CD4-positive, alpha-beta memory T cell (primary cell): ENCODE measurements at regions of chr2 and their contacts with region 1.

Region 1: GRCh38 chr2:219229305-219230058 is at the starts of genes ANKZF1 and ATG9A:
- DNase-seq: peak; percentile 98 to 100 (median 99)
- H3K4me3 ChIP-seq: peak within 1 kb of the TSS; percentile 63 to 69
- H3K4me3 Mint-ChIP-seq: peak within 1 kb of the TSS; percentile 94 to 99 (median 96)
- H3K27ac ChIP-seq: peak within 1 kb of the TSS; percentile 87
- H3K27ac Mint-ChIP-seq: peak within 1 kb of the TSS; percentile 94 to 98 (median 96)
- H3K4me1 ChIP-seq: peaks cover 49% of the 10 kb centered on the region
- H3K4me1 Mint-ChIP-seq: peaks cover 28 to 82% (median 51%) of the 10 kb centered on the region in 4 donors
- H3K27me3 ChIP-seq: no peaks in the 10 kb centered on the region
- H3K27me3 Mint-ChIP-seq: no peaks in the 10 kb centered on the region
- total RNA-seq, gene ANKZF1: 244 to 260 TPM
- total RNA-seq, gene ATG9A: 48.7 to 53.0 TPM

Region 2: GRCh38 chr2:219171231-219171651 is 58.2 kb before region 1 on chr2:
- CTCF ChIA-PET with region 1: interaction called, 13 read pairs
- POLR2A ChIA-PET with region 1: interaction called, 73 read pairs
- intact Hi-C with region 1: no loop called
- DNase-seq: peak; percentile 39 to 58 (median 49)
- H3K4me3 ChIP-seq: no peak overlapping the region
- H3K4me3 Mint-ChIP-seq: peak overlapping the region in 1 of 8 donors; percentile 25
- H3K27ac ChIP-seq: no peak overlapping the region
- H3K27ac Mint-ChIP-seq: peak overlapping the region; percentile 35 to 91 (median 75)
- H3K4me1 ChIP-seq: peaks cover 31% of the 10 kb centered on the region
- H3K4me1 Mint-ChIP-seq: peaks cover 15 to 46% (median 31%) of the 10 kb centered on the region in 4 donors
- H3K27me3 ChIP-seq: no peaks in the 10 kb centered on the region
- H3K27me3 Mint-ChIP-seq: no peaks in the 10 kb centered on the region

Region 3: DNA sequence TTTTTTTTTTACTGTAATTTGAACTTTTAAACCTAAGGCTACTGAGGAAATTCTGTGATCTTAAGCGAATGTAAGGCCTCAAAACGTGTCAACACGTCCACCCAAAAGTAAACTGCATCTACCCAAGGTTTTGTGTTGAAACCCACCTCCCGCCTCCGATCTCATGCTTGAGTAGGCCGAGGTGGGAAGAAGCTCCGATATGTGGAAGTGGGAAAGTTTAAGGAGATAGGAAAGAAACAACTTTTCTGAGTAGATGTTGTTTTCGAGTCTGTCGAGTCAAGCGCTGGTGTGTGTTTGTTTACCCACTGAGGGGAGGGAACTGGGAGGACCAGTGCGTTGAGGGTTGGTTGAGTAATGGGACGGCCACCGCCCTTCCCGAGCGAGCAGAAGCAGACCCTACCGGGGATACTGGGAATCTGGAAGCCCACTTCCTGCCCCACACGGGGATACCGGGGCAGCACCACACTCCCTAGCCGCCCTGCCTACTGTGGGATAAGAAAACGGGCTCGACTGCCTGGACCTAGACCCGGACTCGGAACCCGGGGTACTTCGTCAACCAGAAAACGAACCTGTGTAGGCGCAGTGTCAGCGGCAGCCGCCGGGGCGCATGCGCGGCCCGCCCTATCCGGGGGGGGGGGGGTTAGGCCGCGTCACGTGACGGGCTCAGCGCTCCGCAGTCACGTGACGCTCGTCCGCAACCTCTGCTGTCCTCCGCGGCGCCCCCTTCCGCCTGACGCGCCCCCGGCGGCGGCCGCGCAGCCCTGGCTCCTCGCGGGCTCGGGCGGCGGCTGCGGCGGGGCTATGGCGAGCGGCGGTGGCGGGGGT is 51.7 kb before region 1 on chr2 and contains the start of gene RETREG2:
- CTCF ChIA-PET with region 1: interaction called, 3 read pairs
- POLR2A ChIA-PET with region 1: interaction called, 73 read pairs
- intact Hi-C with region 1: loop called (anchors 1 kb)
- DNase-seq: peak; percentile 88 to 91 (median 88)
- H3K4me3 ChIP-seq: peak within 1 kb of the TSS; percentile 81 to 96
- H3K4me3 Mint-ChIP-seq: peak within 1 kb of the TSS; percentile 91 to 98 (median 95)
- H3K27ac ChIP-seq: peak within 1 kb of the TSS; percentile 91
- H3K27ac Mint-ChIP-seq: peak within 1 kb of the TSS; percentile 96 to 99 (median 98)
- H3K4me1 ChIP-seq: peaks cover 66% of the 10 kb centered on the region
- H3K4me1 Mint-ChIP-seq: peaks cover 34 to 79% (median 62%) of the 10 kb centered on the region in 4 donors
- H3K27me3 ChIP-seq: no peaks in the 10 kb centered on the region
- H3K27me3 Mint-ChIP-seq: no peaks in the 10 kb centered on the region
- total RNA-seq, gene RETREG2: 123 to 128 TPM

Region 4: GRCh38 chr2:219218732-219219701 is 10.5 kb before region 1 on chr2 and contains the start of gene ABCB6:
- CTCF ChIA-PET with region 1: interaction called, 4 read pairs
- POLR2A ChIA-PET with region 1: interaction called, 72 read pairs
- intact Hi-C with region 1: loop called (anchors 1 kb)
- DNase-seq: peak; percentile 81 to 93 (median 83)
- H3K4me3 ChIP-seq: peak within 1 kb of the TSS; percentile 49 to 68
- H3K4me3 Mint-ChIP-seq: peak within 1 kb of the TSS; percentile 82 to 93 (median 84)
- H3K27ac ChIP-seq: peak within 1 kb of the TSS; percentile 53
- H3K27ac Mint-ChIP-seq: peak within 1 kb of the TSS; percentile 74 to 96 (median 88)
- H3K4me1 ChIP-seq: peaks cover 24% of the 10 kb centered on the region
- H3K4me1 Mint-ChIP-seq: peaks cover 8 to 25% (median 19%) of the 10 kb centered on the region in 4 donors
- H3K27me3 ChIP-seq: no peaks in the 10 kb centered on the region
- H3K27me3 Mint-ChIP-seq: no peaks in the 10 kb centered on the region
- total RNA-seq, gene ABCB6: 10.7 to 11.1 TPM

Region 5: DNA sequence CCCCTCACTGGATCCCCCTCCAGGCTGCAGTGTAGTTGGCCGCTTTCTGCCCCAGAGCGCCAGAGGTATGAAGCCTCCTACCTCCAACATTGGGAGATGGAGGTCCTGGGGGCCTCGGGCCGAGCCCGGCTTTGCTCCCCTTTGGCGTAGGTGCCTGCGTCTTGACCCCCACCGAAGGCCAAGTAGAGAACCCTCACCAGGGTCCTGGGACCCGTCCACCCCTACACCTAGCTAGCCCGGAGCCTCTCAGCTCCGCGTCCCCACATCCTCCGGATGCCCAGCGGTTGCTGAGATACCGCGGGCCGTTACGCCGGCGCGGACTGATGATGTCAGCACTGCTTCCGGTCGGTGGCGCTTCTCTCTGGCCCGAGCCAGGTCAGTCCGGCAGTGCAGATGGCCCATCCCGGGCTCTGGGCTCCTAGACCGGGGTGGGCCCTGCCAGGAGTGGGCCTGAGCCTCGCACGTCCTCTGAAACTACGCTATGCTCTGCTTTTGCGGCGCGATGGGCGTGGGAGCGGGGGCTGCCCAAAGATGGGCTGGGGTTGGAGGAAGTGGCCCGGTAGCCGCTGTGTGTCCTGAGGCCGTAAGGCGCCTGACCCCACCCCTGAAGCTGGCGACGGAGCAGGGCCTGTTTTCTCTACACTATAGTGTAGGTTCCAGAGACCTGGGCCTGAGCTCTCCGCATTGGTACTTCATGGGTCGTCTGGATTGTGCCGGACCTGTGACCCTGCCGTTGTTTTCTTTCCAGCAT is 15.8 kb after region 1 on chr2 and contains the starts of genes GLB1L and STK16:
- CTCF ChIA-PET with region 1: interaction called, 25 read pairs
- POLR2A ChIA-PET with region 1: interaction called, 684 read pairs
- intact Hi-C with region 1: loop called (anchors 1 kb)
- DNase-seq: peak; percentile 85 to 88 (median 86)
- H3K4me3 ChIP-seq: peak within 1 kb of the TSS; percentile 45 to 97
- H3K4me3 Mint-ChIP-seq: peak within 1 kb of the TSS; percentile 85 to 99 (median 94)
- H3K27ac ChIP-seq: peak within 1 kb of the TSS; percentile 94
- H3K27ac Mint-ChIP-seq: peak within 1 kb of the TSS; percentile 96 to 99 (median 99)
- H3K4me1 ChIP-seq: peaks cover 59% of the 10 kb centered on the region
- H3K4me1 Mint-ChIP-seq: peaks cover 39 to 80% (median 56%) of the 10 kb centered on the region in 4 donors
- H3K27me3 ChIP-seq: no peaks in the 10 kb centered on the region
- H3K27me3 Mint-ChIP-seq: no peaks in the 10 kb centered on the region
- total RNA-seq, gene GLB1L: 1.5 to 2.5 TPM
- total RNA-seq, gene STK16: 19.3 to 21.1 TPM

Region 6: DNA sequence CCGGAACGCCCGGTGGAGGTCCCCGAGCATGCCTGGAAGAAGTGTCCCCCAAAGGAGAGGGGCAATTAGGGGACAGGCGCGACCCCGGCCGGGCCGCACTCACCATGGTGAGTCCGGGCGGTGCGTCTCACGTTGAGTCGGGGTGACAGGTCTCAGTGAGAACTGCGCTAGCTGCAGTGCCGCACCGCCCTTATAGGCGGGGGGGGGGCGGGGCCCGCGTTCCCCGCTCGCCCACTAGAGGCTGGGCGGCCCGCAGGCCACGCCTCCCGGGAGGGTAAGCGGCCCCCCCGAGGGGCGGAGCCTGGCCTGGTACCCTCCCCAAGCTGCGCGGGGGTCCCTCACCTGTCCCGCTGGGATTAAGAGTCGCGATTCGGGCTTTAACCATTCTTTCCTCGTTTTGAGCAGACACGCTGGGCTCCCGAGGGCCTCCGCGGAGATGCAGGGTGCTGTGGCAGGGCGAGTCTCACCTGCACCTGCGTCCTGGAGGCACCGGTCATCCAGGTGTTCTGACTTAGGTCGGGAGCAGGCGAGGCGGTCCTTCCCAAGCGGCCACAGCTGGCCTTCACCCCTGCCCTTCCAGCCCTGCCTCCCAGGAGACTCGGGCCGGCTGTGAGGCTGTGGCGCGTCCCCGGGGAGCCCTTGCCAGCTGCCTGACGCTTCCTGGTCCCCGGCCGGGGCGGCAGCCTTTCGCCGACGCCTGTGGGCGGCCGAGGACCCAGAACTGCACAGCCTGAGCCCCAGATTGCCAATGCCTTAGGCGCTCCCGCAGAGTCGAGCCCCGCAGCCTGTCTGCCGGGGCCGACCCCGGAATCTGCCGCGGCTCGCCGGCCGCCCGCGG is 24.5 kb after region 1 on chr2 and contains the start of gene TUBA4A:
- CTCF ChIA-PET with region 1: interaction called, 25 read pairs
- POLR2A ChIA-PET with region 1: interaction called, 684 read pairs
- intact Hi-C with region 1: loop called (anchors 1 kb)
- DNase-seq: peak; percentile 89 to 90 (median 90)
- H3K4me3 ChIP-seq: peak within 1 kb of the TSS; percentile 94 to 100
- H3K4me3 Mint-ChIP-seq: peak within 1 kb of the TSS; percentile 85 to 99 (median 94)
- H3K27ac ChIP-seq: peak within 1 kb of the TSS; percentile 87
- H3K27ac Mint-ChIP-seq: peak within 1 kb of the TSS; percentile 92 to 98 (median 97)
- H3K4me1 ChIP-seq: peaks cover 42% of the 10 kb centered on the region
- H3K4me1 Mint-ChIP-seq: peaks cover 34 to 60% (median 45%) of the 10 kb centered on the region in 4 donors
- H3K27me3 ChIP-seq: no peaks in the 10 kb centered on the region
- H3K27me3 Mint-ChIP-seq: no peaks in the 10 kb centered on the region
- total RNA-seq, gene TUBA4A: 242 to 259 TPM

Region 7: DNA sequence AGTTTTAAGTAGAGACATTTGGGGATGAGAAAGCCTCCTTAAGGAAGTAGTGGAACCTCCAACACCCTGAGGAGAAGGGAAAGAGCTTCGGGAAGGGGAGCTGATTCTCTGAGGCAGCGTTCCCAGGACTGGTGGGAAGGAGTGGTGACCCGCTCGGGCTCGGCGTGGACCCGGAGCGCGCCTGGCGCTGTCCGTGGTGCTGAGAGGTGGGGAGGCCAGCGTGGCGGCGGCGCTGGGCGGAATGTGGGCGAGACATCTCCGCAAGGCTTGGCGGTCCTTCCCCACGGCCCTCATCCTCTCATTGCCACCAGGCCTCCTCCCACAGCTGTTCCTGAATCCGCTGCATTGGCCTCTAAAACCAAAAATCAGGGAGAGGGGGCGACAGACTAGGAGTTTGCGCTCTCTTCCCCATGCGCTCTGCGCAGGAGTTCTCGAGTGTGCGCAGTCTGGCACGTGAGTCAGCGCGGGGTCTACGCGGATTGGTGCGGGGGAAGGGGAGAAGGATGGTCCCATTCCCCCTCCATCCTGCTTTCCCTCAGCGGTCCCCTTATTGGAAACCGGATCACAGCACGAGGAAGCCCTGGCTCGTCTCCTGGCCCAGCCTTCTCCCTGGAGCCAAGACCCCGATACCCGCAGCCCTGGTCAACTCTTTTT is 102.2 kb after region 1 on chr2:
- CTCF ChIA-PET with region 1: no interaction called
- POLR2A ChIA-PET with region 1: no interaction called
- intact Hi-C with region 1: no loop called
- DNase-seq: peak in 2 of 5 donors; percentile 4 to 15
- H3K4me3 ChIP-seq: no peak overlapping the region
- H3K4me3 Mint-ChIP-seq: no peak overlapping the region
- H3K27ac ChIP-seq: no peak overlapping the region
- H3K27ac Mint-ChIP-seq: no peak overlapping the region
- H3K4me1 ChIP-seq: no peaks in the 10 kb centered on the region
- H3K4me1 Mint-ChIP-seq: no peaks in the 10 kb centered on the region
- H3K27me3 ChIP-seq: peaks cover 25% of the 10 kb centered on the region
- H3K27me3 Mint-ChIP-seq: peaks cover 38 to 67% of the 10 kb centered on the region in 2 donors

Region 8: DNA sequence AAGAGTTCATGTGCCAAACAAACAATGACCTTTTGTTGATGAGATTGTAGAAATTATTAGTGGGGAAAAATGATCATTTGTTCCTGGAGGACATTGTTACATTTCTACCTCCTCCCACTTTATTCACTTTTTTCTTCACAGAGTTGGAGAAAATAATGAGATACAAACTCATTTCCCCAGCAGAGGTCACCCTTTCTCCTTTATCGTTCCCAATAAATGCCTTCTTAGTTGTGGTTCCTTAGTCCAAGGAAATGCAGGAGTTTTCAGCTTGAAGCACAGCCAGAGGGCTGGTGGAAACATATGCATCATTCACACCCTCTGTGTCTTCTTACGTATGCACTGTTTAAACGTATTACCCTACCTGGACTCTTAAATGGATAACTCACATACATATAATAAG is 506.7 kb after region 1 on chr2:
- CTCF ChIA-PET with region 1: no interaction called
- POLR2A ChIA-PET with region 1: no interaction called
- intact Hi-C with region 1: no loop called
- DNase-seq: peak in 3 of 5 donors; percentile 3 to 9 (median 5)
- H3K4me3 ChIP-seq: no peak overlapping the region
- H3K4me3 Mint-ChIP-seq: no peak overlapping the region
- H3K27ac ChIP-seq: no peak overlapping the region
- H3K27ac Mint-ChIP-seq: no peak overlapping the region
- H3K4me1 ChIP-seq: no peaks in the 10 kb centered on the region
- H3K4me1 Mint-ChIP-seq: no peaks in the 10 kb centered on the region
- H3K27me3 ChIP-seq: no peaks in the 10 kb centered on the region
- H3K27me3 Mint-ChIP-seq: peaks cover 4 to 12% of the 10 kb centered on the region in 2 donors